ENCODE measurements at regions of chr4 and their contacts with region 1.

Region 1: DNA sequence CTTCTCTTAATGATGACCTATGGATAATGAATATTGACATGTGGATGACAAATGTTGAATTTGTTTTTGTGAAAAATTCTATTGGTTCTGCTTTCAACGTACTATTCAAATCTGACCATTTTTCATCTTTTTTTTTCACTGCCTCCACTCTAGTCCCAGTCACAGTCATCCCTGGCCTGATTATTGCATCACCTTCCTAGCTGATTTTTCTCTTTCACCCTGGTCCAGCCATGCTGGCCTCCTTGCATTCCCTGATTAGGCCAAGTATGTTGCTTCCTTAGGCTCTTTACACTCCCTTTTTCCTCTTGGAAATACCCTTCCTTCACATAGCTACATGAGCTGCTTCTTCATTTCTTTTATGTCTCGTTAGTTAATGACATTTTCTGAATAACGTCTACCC is 58.1 kb upstream of the MAP9 start:
- DNase-seq: no peak
- H3K4me3 ChIP-seq: no peak overlapping the region
- CTCF ChIP-seq: no peak
- POLR2A ChIP-seq: no peak

Region 2: GRCh38 chr4:155787113-155787710 is 352.3 kb after region 1 on chr4:
- intact Hi-C with region 1: loop called (anchors 5 kb)
- DNase-seq: no peak
- H3K4me3 ChIP-seq: no peak overlapping the region
- CTCF ChIP-seq: peak in 1 of 3 donors; percentile 60
- POLR2A ChIP-seq: no peak

Measured in lower leg skin (tissue), 4 donors.